ENCODE measurements at regions of chr21 and their contacts with region 1.

Region 1: DNA sequence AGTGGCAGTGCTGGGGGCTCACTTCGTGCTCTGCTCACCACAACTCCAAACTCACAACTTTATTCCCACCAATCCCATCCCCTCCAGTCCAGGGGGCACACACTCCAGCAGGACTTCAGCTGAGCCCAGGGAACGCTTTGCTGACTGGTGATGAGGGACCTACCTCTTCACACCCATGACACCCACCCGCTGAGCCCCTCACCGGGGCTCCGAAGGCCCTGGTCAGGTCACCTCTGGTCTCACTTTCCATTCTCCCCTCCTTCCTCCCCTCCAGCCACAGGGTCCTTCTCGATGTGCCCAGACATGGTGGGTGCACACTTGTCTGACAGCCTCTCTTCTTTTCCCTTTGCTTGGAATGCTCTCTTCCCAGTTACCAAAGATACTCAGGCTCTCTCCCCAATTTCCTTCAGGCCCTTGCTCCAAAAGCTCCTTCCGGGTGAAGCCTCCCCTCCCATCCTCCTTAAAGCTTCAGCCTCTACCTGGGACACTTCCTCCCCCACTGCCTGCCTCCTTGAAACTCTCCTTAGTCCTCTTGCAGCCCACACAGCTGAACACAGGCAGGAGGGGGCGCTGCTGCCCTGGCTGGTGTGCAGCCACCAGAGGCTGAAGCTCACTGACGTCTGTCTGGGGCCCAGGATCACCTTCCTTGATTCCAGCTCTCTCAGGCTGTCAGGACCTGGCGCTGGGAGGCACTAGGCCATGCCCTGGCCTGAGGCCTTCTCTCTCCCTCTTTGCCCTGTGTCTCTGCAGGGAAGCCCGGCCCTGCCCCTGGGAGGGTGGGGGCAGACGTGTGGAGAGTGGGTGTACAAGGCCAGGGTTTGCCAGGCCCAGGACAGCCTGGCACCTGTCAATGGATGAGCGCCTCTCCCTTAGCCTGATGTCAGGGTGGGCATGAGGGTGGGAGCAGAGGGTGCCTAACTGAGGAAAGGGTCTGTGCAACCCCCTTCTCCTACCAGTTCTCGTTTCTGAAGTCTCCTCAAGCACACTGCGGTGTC is 1.6 kb downstream of the KCNE1 start:
- DNase-seq: no peak
- H3K4me3 ChIP-seq: no peak overlapping the region
- CTCF ChIP-seq: peak; percentile 98

Region 2: DNA sequence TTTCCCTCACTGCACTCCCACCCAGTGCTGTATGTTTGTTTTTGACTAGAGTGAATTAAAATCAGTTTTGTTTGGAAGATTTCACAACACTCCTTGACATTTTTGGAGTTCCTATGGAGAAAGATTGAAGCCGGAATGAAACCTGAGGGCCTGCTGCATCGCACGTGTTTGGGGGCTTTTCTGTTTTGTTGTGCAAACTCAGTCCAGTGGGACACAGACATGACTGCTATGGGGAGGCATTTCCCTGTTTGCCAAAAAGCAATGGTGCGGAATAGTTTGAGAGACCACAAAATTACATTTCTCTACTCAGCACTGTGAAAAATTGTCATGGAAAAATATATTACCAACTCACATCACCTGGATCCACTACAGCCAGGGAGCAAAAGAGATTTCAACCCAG is 190.4 kb before region 1 on chr21:
- CTCF ChIA-PET with region 1: no interaction called
- POLR2A ChIA-PET with region 1: no interaction called
- DNase-seq: no peak
- H3K4me3 ChIP-seq: no peak overlapping the region
- CTCF ChIP-seq: no peak

Region 3: GRCh38 chr21:34498623-34499022 is 11.8 kb before region 1 on chr21:
- CTCF ChIA-PET with region 1: interaction called, 33 read pairs
- POLR2A ChIA-PET with region 1: no interaction called
- DNase-seq: no peak
- H3K4me3 ChIP-seq: no peak overlapping the region
- CTCF ChIP-seq: no peak

Region 4: GRCh38 chr21:34582506-34583150 is 72.2 kb after region 1 on chr21:
- CTCF ChIA-PET with region 1: interaction called, 351 read pairs
- POLR2A ChIA-PET with region 1: interaction called, 3 read pairs
- DNase-seq: no peak
- H3K4me3 ChIP-seq: no peak overlapping the region
- CTCF ChIP-seq: peak; percentile 66

Region 5: GRCh38 chr21:34609244-34609932 is 98.9 kb after region 1 on chr21:
- CTCF ChIA-PET with region 1: interaction called, 336 read pairs
- POLR2A ChIA-PET with region 1: no interaction called
- DNase-seq: no peak
- H3K4me3 ChIP-seq: no peak overlapping the region
- CTCF ChIP-seq: no peak

Region 6: DNA sequence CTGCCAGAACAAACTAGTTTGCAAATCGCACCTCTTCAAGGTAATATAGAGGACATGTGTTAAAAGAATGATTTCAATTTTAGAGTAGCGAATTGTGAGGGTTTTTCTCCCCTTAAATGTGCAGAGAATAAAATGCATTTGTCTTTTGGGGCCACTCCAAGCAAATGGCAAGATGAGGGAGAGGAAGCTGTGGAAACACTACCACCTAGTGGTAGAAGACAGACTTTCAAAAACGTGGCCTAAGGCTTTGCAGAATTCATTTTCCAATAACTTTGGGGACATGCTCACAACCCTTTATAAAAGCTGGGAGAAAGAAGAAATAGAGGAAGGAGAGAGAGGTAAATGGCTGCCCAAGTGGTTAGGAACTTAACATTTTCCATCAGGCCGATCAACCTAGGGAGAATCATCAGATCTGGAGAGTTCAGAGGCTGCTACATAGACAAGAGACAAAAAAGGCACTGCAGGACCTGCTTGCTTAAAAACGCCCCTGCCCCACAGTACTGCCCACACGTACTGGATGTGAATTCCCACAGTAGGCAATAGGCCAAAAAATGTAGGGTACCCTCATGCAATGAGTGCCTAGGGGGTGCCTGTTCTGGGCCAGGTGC is 120.2 kb after region 1 on chr21:
- CTCF ChIA-PET with region 1: interaction called, 23 read pairs
- POLR2A ChIA-PET with region 1: no interaction called
- DNase-seq: no peak
- H3K4me3 ChIP-seq: no peak overlapping the region
- CTCF ChIP-seq: peak; percentile 63

Region 7: GRCh38 chr21:34679051-34679450 is 168.6 kb after region 1 on chr21:
- CTCF ChIA-PET with region 1: no interaction called
- POLR2A ChIA-PET with region 1: no interaction called
- DNase-seq: no peak
- H3K4me3 ChIP-seq: no peak overlapping the region
- CTCF ChIP-seq: no peak

Measured in AG04449 (cell line).